ENCODE measurements at regions of chr9 and their contacts with region 1.

Region 1: DNA sequence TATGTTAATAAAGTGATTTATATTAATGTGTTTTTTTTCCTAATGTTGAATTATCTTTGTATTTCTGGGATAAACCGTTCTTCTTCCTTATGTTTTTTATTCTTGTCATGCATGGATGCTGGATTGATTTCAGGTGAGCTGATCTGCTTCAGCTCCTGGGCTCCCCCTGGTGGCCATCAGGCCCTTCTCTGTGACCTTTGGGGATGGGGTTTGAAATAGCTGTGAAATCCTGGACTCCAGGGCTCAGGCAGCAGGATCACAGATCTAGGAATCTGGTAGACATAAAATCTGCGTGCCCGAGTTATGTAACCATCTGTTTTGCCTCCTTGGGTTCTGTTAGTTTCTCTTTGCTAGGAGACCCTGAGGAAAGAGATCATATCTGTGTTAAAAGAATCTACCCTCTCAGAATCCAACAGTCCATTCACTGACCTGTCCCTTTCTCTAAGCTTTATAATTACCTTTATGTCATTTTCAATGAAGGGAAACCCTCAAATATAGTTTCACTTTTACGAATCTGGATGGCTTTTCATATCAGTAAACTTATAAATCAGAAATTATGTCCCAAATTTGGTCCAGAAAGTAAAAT is 12.2 kb upstream of the OR13J1 start:
- DNase-seq: peak; percentile 83
- H3K4me3 ChIP-seq: no peak overlapping the region; a peak in 1 of 4 replicates
- H3K27ac ChIP-seq: no peak overlapping the region
- H3K4me1 ChIP-seq: no peaks in the 10 kb centered on the region; a peak in 1 of 4 replicates
- H3K27me3 ChIP-seq: no peaks in the 10 kb centered on the region
- CTCF ChIP-seq: peak; percentile 99
- EP300 ChIP-seq: no peak
- RAD21 ChIP-seq: peak; percentile 84

Region 2: DNA sequence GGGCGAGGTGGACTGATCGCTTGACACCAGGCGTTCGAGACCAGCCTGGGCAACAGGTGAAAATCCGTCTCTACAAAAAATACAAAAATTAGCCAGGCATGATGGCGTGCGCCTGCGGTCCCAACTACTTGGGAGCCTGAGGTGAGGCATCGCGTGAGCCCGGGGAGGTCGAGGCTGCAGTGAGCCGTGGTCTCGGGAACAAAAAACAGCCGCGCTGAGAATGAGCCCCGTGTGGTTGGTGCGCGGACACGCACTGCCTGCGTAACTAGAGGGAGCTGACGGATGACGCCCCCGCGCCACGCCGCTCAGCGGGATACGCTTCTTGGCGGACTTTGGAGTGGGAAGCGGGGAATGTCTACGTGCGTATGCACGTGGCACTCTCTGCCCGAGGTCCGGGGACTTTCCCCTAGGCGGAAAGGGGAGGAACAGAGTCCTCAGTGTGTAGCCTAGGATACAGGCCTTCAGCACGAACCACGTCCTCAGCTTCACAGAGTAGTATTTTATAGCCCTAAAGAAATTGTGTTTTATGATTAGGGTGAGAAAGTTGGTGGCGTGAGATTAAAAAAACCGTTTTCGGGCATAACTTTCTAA is 224.7 kb before region 1 on chr9 and contains the start of gene RMRP:
- CTCF ChIA-PET with region 1: interaction called, 11 read pairs
- POLR2A ChIA-PET with region 1: no interaction called
- DNase-seq: peak; percentile 91
- H3K4me3 ChIP-seq: peak within 1 kb of the TSS; percentile 70 to 82
- H3K27ac ChIP-seq: peak within 1 kb of the TSS; percentile 97 to 98
- H3K4me1 ChIP-seq: peaks cover 0 to 12% of the 10 kb centered on the region in 2 experiments; a peak in 1 of 4 replicates
- H3K27me3 ChIP-seq: no peaks in the 10 kb centered on the region
- CTCF ChIP-seq: 0 out of 2 replicates have a peak, but pooled peaks have one; percentile 27
- EP300 ChIP-seq: peak in 1 of 2 experiments; percentile 74; a peak in 2 of 4 replicates
- RAD21 ChIP-seq: no peak
- polyA plus RNA-seq, gene RMRP: 64.9 and 157 TPM in 2 replicates

Region 3: GRCh38 chr9:35748858-35749514 is 133.4 kb before region 1 on chr9 and contains the starts of genes GBA2 and RGP1:
- CTCF ChIA-PET with region 1: interaction called, 16 read pairs
- POLR2A ChIA-PET with region 1: no interaction called
- DNase-seq: peak; percentile 94
- H3K4me3 ChIP-seq: peak within 1 kb of the TSS; percentile 97 to 98
- H3K27ac ChIP-seq: peak within 1 kb of the TSS; percentile 70 to 79; a peak in 3 of 4 replicates
- H3K4me1 ChIP-seq: peaks cover 12 to 33% of the 10 kb centered on the region in 2 experiments; a peak in 2 of 4 replicates
- H3K27me3 ChIP-seq: no peaks in the 10 kb centered on the region
- CTCF ChIP-seq: no peak
- EP300 ChIP-seq: peak in 1 of 2 experiments; percentile 54; a peak in 1 of 4 replicates
- RAD21 ChIP-seq: no peak
- polyA plus RNA-seq, gene GBA2: 71.5 and 98.2 TPM in 2 replicates
- polyA plus RNA-seq, gene RGP1: 16.1 and 18.6 TPM in 2 replicates

Region 4: GRCh38 chr9:35798658-35799374 is 83.5 kb before region 1 on chr9:
- CTCF ChIA-PET with region 1: interaction called, 136 read pairs
- POLR2A ChIA-PET with region 1: no interaction called
- DNase-seq: peak; percentile 40
- H3K4me3 ChIP-seq: no peak overlapping the region
- H3K27ac ChIP-seq: peak overlapping the region in 1 of 2 experiments; percentile 47; a peak in 3 of 4 replicates
- H3K4me1 ChIP-seq: peaks cover 0 to 10% of the 10 kb centered on the region in 2 experiments; a peak in 2 of 4 replicates
- H3K27me3 ChIP-seq: no peaks in the 10 kb centered on the region
- CTCF ChIP-seq: no peak
- EP300 ChIP-seq: no peak
- RAD21 ChIP-seq: no peak

Region 5: GRCh38 chr9:35814841-35815543 is 67.4 kb before region 1 on chr9 and contains the start of gene HINT2:
- CTCF ChIA-PET with region 1: interaction called, 25 read pairs
- POLR2A ChIA-PET with region 1: no interaction called
- DNase-seq: peak; percentile 95
- H3K4me3 ChIP-seq: peak within 1 kb of the TSS; percentile 81 to 92
- H3K27ac ChIP-seq: peak within 1 kb of the TSS; percentile 77 to 96
- H3K4me1 ChIP-seq: peaks cover 7 to 30% of the 10 kb centered on the region in 2 experiments; a peak in 3 of 4 replicates
- H3K27me3 ChIP-seq: no peaks in the 10 kb centered on the region
- CTCF ChIP-seq: no peak
- EP300 ChIP-seq: no peak
- RAD21 ChIP-seq: no peak
- polyA plus RNA-seq, gene HINT2: 39.9 and 57.2 TPM in 2 replicates

Region 6: GRCh38 chr9:35835216-35835632 is 47.1 kb before region 1 on chr9:
- CTCF ChIA-PET with region 1: interaction called, 12 read pairs
- POLR2A ChIA-PET with region 1: no interaction called
- DNase-seq: no peak
- H3K4me3 ChIP-seq: no peak overlapping the region
- H3K27ac ChIP-seq: no peak overlapping the region
- H3K4me1 ChIP-seq: peaks cover 0 to 11% of the 10 kb centered on the region in 2 experiments; a peak in 1 of 4 replicates
- H3K27me3 ChIP-seq: no peaks in the 10 kb centered on the region
- CTCF ChIP-seq: peak; percentile 25; the same call in 1 of the 2 replicates
- EP300 ChIP-seq: no peak
- RAD21 ChIP-seq: no peak; the same call in 1 of the 2 replicates

Region 7: GRCh38 chr9:35871497-35871896 is 10.9 kb before region 1 on chr9:
- CTCF ChIA-PET with region 1: interaction called, 15 read pairs
- POLR2A ChIA-PET with region 1: no interaction called
- DNase-seq: no peak
- H3K4me3 ChIP-seq: no peak overlapping the region
- H3K27ac ChIP-seq: no peak overlapping the region
- H3K4me1 ChIP-seq: no peaks in the 10 kb centered on the region; a peak in 1 of 4 replicates
- H3K27me3 ChIP-seq: no peaks in the 10 kb centered on the region
- CTCF ChIP-seq: no peak
- EP300 ChIP-seq: no peak
- RAD21 ChIP-seq: no peak

Region 8: DNA sequence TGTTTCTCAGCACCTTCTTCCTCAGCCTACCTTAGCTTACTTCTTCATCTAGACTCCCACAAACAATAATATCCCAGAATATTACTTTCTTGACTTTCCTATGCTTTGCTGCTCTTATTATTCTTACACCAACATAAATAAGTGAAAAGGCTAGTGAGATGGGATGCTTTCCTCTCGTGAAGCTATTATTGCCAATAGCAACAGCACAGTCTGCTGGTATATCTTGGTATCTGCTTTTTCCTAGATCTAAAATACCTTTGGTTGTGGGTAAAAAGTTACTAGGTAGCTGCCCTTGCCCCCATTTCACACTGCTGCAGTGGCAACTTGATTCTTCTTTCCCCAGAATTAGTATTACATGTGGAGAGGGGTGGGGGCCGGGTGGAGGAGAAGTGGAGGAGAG is 228.1 kb after region 1 on chr9:
- CTCF ChIA-PET with region 1: no interaction called
- POLR2A ChIA-PET with region 1: no interaction called
- DNase-seq: no peak
- H3K4me3 ChIP-seq: no peak overlapping the region
- H3K27ac ChIP-seq: no peak overlapping the region
- H3K4me1 ChIP-seq: peaks cover 0 to 7% of the 10 kb centered on the region in 2 experiments; a peak in 2 of 4 replicates
- H3K27me3 ChIP-seq: no peaks in the 10 kb centered on the region
- CTCF ChIP-seq: peak; percentile 40
- EP300 ChIP-seq: no peak
- RAD21 ChIP-seq: peak; percentile 26; the same call in 1 of the 2 replicates